Left cardiac atrium (tissue), 4 donors: ENCODE measurements at regions of chr1 and their contacts with region 1.

Region 1: DNA sequence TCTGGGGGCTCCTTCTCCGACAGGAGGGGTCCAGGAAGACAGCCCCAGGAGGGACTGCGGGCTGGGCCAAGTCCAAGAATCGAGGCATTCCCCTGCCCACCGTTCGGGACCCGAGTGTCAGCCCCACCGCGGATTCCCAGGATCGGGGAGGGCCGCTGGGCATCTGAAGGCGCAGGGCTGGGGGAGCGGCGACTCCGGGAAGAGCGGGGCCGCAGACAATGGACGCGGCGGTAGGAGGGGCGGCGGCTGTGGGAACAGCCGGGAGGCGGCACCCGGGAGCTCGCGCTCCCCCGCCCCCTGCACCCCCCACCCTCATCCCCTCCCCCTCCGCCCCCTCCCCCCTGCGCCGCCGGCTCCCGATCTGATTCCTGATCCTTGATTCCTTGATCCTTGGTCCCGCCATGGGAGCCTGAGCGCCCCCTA is at the start of gene VANGL2:
- DNase-seq: peak; percentile 84
- ATAC-seq: peak; percentile 84 to 86
- total RNA-seq, gene VANGL2: 4.1 to 5.1 TPM

Region 2: GRCh38 chr1:160328184-160328583 is 72.0 kb before region 1 on chr1:
- intact Hi-C with region 1: no loop called
- DNase-seq: no peak
- ATAC-seq: no peak

Region 3: DNA sequence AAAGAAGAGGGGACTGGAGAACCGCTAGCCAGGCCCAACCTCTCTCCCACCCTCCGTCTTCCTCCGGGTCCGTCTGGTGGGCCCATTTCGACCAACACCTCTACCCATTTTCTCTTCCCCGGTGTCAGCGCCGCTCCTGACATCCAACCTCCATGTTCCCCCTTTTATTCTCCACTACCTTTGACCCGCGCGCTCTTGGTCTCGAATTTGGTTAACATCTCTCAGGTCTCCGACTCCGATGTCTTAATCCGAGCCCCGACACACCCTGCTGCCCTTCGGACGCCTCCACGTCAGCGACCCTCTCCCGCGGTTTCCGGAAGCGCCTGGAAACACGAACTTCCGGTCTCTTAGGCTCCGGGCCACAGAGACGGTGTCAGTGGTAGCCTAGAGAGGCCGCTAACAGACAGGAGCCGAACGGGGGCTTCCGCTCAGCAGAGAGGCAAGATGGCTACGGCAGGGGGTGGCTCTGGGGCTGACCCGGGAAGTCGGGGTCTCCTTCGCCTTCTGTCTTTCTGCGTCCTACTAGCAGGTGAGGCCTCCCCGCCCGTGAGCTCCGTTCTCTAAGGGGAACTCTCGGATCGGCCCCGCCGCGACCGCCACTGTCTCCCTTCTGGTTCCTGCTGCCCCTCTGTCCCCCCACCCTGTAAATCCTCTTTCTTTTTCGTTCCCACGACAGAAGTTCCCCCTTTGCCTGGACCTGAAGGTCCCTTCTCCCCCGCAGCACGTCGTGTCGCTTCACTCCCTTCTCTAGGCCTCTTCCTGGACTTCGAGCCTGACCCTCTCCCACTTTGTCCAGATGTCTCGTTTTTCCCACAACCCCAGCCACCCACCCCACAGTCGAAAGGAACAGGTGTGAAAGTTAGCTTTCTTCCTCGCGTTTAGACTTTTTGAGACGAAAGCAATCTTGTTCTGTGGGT is 57.0 kb before region 1 on chr1 and contains the starts of genes COPA and NCSTN:
- intact Hi-C with region 1: loop called in 1 of 2 experiments (anchors 10 kb)
- DNase-seq: peak; percentile 96
- ATAC-seq: peak; percentile 98 to 99
- total RNA-seq, gene COPA: 108 to 147 TPM
- total RNA-seq, gene NCSTN: 57.4 to 70.2 TPM